Right lobe of liver (tissue), 6 donors: ENCODE measurements at regions of chr13 and their contacts with region 1.

Region 1: GRCh38 chr13:79533781-79534400 is 52.9 kb downstream of the NDFIP2 start:
- DNase-seq: no peak
- ATAC-seq: peak in 1 of 4 donors; percentile 59
- H3K4me3 ChIP-seq: no peak overlapping the region
- H3K27ac ChIP-seq: no peak overlapping the region
- H3K4me1 ChIP-seq: no peaks in the 10 kb centered on the region
- H3K27me3 ChIP-seq: no peaks in the 10 kb centered on the region
- CTCF ChIP-seq: no peak
- POLR2A ChIP-seq: no peak

Region 2: GRCh38 chr13:79413521-79413920 is 120.4 kb before region 1 on chr13:
- intact Hi-C with region 1: loop called in 1 of 2 experiments (anchors 10 kb)
- DNase-seq: no peak
- ATAC-seq: no peak
- H3K4me3 ChIP-seq: no peak overlapping the region
- H3K27ac ChIP-seq: no peak overlapping the region
- H3K4me1 ChIP-seq: peaks cover 0 to 8% (median 0%) of the 10 kb centered on the region in 4 donors
- H3K27me3 ChIP-seq: no peaks in the 10 kb centered on the region
- CTCF ChIP-seq: no peak
- POLR2A ChIP-seq: no peak

Region 3: GRCh38 chr13:79435561-79435990 is 98.3 kb before region 1 on chr13:
- intact Hi-C with region 1: loop called in 1 of 2 experiments (anchors 10 kb)
- DNase-seq: no peak
- ATAC-seq: no peak
- H3K4me3 ChIP-seq: no peak overlapping the region
- H3K27ac ChIP-seq: no peak overlapping the region
- H3K4me1 ChIP-seq: no peaks in the 10 kb centered on the region
- H3K27me3 ChIP-seq: no peaks in the 10 kb centered on the region
- CTCF ChIP-seq: no peak
- POLR2A ChIP-seq: no peak